Activated B cell treated with CpG ODN at 0.5 μM for 24 hours (primary cell): ENCODE measurements at regions of chr15 and their contacts with region 1.

Region 1: GRCh38 chr15:75042730-75043508 is 19.5 kb downstream of the PPCDC start:
- DNase-seq: peak; percentile 82
- ATAC-seq: peak; percentile 87
- H3K4me3 Mint-ChIP-seq: peak overlapping the region; percentile 70
- H3K27ac Mint-ChIP-seq: peak overlapping the region; percentile 84
- H3K4me1 Mint-ChIP-seq: peaks cover 60% of the 10 kb centered on the region
- H3K27me3 Mint-ChIP-seq: no peaks in the 10 kb centered on the region
- CTCF ChIP-seq: no peak

Region 2: GRCh38 chr15:75023181-75023871 is 19.6 kb before region 1 on chr15 and contains the start of gene PPCDC:
- CTCF ChIA-PET with region 1: interaction called, 9 read pairs
- POLR2A ChIA-PET with region 1: interaction called, 25 read pairs
- intact Hi-C with region 1: no loop called
- DNase-seq: peak; percentile 82
- ATAC-seq: peak; percentile 100
- H3K4me3 Mint-ChIP-seq: peak within 1 kb of the TSS; percentile 95
- H3K27ac Mint-ChIP-seq: peak within 1 kb of the TSS; percentile 86
- H3K4me1 Mint-ChIP-seq: peaks cover 9% of the 10 kb centered on the region
- H3K27me3 Mint-ChIP-seq: peaks cover 6% of the 10 kb centered on the region
- CTCF ChIP-seq: no peak
- total RNA-seq, gene PPCDC: 13.5 and 16.6 TPM in 2 replicates

Region 3: DNA sequence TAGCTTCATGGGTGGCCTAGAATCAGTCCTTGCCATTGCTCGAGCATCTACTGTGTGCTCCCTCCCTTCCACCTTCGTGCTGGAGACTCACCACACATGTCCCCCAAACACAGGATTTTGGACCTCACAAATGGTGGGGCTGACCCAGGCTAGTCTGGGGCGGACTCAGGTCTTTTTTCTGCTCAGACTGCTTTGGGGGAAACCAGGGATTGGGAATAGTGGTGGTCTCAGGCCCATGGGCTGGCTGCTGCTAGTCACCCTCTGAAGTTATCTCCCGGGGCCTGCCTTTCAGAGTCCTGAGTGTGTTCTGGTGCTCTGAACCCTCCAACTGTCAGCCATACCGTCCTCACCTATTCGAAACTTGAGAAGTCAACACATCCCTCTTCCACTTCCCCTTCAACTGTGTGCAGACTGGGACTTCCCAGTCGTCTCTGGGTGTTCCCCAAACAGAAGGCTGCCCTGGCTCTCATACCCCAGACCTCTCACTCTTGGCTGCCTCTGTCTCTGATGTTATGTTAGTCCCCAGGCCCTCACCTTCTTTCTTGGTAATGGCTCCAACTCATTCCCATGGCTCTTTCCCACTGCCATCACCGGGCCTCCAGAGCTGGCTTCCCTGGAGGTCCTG is 26.5 kb after region 1 on chr15:
- CTCF ChIA-PET with region 1: interaction called, 23 read pairs
- POLR2A ChIA-PET with region 1: interaction called, 40 read pairs
- intact Hi-C with region 1: loop called (anchors 1 kb)
- DNase-seq: peak; percentile 44
- ATAC-seq: peak; percentile 100
- H3K4me3 Mint-ChIP-seq: peak overlapping the region; percentile 29
- H3K27ac Mint-ChIP-seq: peak overlapping the region; percentile 82
- H3K4me1 Mint-ChIP-seq: peaks cover 60% of the 10 kb centered on the region
- H3K27me3 Mint-ChIP-seq: no peaks in the 10 kb centered on the region
- CTCF ChIP-seq: no peak

Region 4: GRCh38 chr15:75090388-75090734 is 47.4 kb after region 1 on chr15:
- CTCF ChIA-PET with region 1: interaction called, 12 read pairs
- POLR2A ChIA-PET with region 1: interaction called, 16 read pairs
- intact Hi-C with region 1: loop called (anchors 1 kb)
- DNase-seq: no peak
- ATAC-seq: no peak
- H3K4me3 Mint-ChIP-seq: no peak overlapping the region
- H3K27ac Mint-ChIP-seq: no peak overlapping the region
- H3K4me1 Mint-ChIP-seq: peaks cover 26% of the 10 kb centered on the region
- H3K27me3 Mint-ChIP-seq: peaks cover 13% of the 10 kb centered on the region
- CTCF ChIP-seq: no peak

Region 5: DNA sequence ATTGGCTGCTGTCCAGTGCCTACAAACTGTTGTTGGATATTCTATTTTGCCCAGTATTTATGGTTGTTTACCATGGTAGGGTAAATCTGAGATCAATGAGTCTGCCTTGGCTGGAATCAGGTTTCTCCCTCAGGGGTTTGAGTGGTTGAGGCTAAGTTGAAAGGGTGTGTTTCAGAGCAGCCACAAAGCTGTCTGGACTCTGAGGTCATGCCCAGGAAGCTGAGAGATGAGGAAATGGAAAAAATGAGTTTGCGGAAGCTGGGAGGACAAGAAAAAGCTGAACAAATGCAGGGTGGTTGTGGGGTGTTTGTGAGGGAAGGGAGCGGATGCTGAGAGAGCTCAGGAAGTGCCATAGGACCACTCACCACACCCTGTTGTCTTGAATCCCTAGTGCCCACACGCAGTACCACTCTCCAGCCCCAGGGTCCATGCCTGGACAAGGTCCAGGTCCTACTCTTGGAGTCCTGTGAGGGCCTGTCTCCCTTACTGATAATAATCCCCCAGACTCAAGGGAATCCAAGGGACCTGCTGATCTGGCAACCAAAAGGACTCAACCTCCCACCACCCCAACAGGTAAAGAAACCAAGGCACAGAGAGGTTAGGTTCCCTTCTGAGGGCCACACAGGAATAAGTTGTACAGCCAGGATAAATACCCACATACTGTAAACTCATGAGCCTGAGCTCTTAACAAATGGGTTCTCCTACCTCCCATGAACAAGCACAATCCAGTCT is 62.1 kb after region 1 on chr15:
- CTCF ChIA-PET with region 1: interaction called, 32 read pairs
- POLR2A ChIA-PET with region 1: interaction called, 17 read pairs
- intact Hi-C with region 1: loop called (anchors 1 kb)
- DNase-seq: no peak
- ATAC-seq: peak; percentile 47
- H3K4me3 Mint-ChIP-seq: peak overlapping the region; percentile 56
- H3K27ac Mint-ChIP-seq: peak overlapping the region; percentile 80
- H3K4me1 Mint-ChIP-seq: peaks cover 61% of the 10 kb centered on the region
- H3K27me3 Mint-ChIP-seq: peaks cover 5% of the 10 kb centered on the region
- CTCF ChIP-seq: no peak

Region 6: DNA sequence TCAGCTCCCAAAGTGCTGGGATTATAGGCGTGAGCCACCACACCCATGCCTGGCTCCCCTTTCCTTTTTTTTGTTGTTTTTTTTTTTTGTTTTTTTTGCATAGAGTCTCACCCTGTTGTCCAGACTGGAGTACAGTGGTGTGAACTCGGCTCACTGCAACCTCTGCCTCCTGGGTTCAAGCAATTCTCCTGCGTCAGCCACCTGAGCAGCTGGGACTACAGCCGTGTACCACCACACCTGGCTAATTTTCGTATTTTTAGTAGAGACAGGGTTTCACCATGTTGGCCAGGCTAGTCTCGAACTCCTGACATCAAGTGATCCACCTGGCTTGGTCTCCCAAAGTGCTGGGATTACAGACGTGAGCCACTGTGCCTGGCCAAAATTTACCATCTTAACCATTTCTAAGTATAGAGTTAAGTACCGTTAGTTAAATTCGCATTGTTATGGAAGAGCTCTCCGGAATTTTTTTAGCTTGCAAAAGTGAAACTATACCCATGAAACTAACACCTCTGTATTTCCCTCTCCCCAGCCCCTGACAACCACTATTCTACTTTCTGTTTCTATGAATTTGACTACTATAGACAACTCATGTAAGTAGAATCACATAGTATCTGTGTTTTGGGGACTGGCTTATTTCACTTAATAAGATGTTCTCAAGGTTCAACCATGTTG is 87.8 kb after region 1 on chr15:
- CTCF ChIA-PET with region 1: interaction called, 24 read pairs
- POLR2A ChIA-PET with region 1: interaction called, 13 read pairs
- intact Hi-C with region 1: loop called (anchors 1 kb)
- DNase-seq: no peak
- ATAC-seq: peak; percentile 96
- H3K4me3 Mint-ChIP-seq: peak overlapping the region; percentile 80
- H3K27ac Mint-ChIP-seq: peak overlapping the region; percentile 73
- H3K4me1 Mint-ChIP-seq: peaks cover 19% of the 10 kb centered on the region
- H3K27me3 Mint-ChIP-seq: no peaks in the 10 kb centered on the region
- CTCF ChIP-seq: no peak

Region 7: GRCh38 chr15:75156326-75157215 is 113.7 kb after region 1 on chr15:
- CTCF ChIA-PET with region 1: no interaction called
- POLR2A ChIA-PET with region 1: no interaction called
- intact Hi-C with region 1: no loop called
- DNase-seq: no peak
- ATAC-seq: no peak
- H3K4me3 Mint-ChIP-seq: no peak overlapping the region
- H3K27ac Mint-ChIP-seq: no peak overlapping the region
- H3K4me1 Mint-ChIP-seq: peaks cover 11% of the 10 kb centered on the region
- H3K27me3 Mint-ChIP-seq: peaks cover 16% of the 10 kb centered on the region
- CTCF ChIP-seq: no peak

Region 8: DNA sequence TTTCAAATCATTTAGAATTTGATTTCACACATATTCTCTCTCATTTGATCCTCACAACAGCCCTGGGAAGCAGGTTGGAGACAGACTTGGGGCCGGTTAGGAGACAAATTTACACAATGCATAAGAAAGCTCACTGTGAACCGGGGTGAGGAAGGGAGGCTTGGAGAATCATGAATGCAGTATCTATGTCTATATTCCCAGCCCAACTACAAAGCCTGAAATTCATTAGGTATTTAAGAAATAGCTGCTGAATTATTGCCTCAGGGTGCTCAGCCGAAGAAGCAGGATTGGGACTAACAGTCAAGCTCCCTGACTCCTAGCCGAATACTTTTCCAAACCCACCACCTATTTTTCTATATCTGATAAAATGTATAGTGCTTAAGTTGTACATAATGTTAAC is 206.8 kb after region 1 on chr15:
- CTCF ChIA-PET with region 1: no interaction called
- POLR2A ChIA-PET with region 1: no interaction called
- intact Hi-C with region 1: no loop called
- DNase-seq: no peak
- ATAC-seq: no peak
- H3K4me3 Mint-ChIP-seq: no peak overlapping the region
- H3K27ac Mint-ChIP-seq: no peak overlapping the region
- H3K4me1 Mint-ChIP-seq: no peaks in the 10 kb centered on the region
- H3K27me3 Mint-ChIP-seq: peaks cover 22% of the 10 kb centered on the region
- CTCF ChIP-seq: no peak